ENCODE measurements at regions of chr11 and their contacts with region 1.

Region 1: GRCh38 chr11:126480410-126481302 is 125.2 kb downstream of the ST3GAL4 start:
- DNase-seq: peak; percentile 60 to 66
- H3K4me3 ChIP-seq: no peak overlapping the region; the same call in 1 of the 2 replicates
- H3K27ac ChIP-seq: no peak overlapping the region
- H3K4me1 ChIP-seq: peaks cover 12% of the 10 kb centered on the region; the same call in 1 of the 2 replicates
- H3K27me3 ChIP-seq: 0 out of 2 replicates have a peak, but pooled peaks cover 3% of the 10 kb centered on the region
- CTCF ChIP-seq: peak; percentile 96

Region 2: DNA sequence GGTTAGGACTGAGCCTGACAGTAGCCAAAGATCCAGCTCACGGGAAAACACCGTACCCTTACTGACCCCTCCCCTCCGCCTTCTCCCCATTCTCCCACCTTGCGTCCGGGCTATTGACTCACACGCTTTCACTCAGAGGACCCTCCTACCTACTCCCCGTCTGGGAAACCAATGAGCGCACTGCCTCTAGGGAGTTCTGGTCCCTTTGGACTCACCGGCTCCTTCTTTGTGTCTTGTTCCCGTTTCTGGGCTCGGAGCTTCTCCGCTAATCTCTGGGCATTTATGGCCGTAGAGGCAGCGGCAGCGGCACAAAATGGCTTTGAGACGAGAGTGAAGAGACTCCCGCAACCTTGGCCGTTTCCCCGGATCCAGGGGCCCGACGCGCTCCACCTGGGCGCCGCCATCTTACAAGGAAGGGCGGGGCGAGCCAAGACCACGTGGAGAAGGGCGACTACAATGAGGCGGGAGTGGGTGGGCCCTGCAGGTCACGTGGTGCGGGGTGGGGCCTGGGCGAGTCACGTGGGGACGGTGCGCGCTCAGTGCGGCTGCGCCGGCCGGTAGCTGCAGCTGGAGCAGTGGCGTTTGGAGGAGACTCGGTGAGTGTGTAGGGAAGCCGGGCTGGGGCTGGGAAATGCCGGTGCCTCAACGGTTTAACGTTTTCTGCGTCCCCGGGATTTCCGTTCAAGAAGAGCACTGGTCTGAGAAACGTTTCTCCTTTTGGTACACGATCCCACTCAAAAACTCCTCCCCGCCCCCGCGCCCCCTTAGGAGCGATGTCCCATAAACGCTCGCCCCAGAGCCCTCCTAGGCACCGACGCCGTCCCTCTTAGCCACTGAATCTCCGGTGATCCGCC is 269.2 kb before region 1 on chr11 and contains the starts of genes FAM118B and RPUSD4:
- CTCF ChIA-PET with region 1: interaction called, 12 read pairs
- POLR2A ChIA-PET with region 1: no interaction called
- intact Hi-C with region 1: no loop called
- DNase-seq: peak; percentile 87 to 98
- H3K4me3 ChIP-seq: peak within 1 kb of the TSS; percentile 72
- H3K27ac ChIP-seq: peak within 1 kb of the TSS; percentile 43
- H3K4me1 ChIP-seq: peaks cover 18% of the 10 kb centered on the region
- H3K27me3 ChIP-seq: no peaks in the 10 kb centered on the region
- CTCF ChIP-seq: no peak
- total RNA-seq, gene FAM118B: 12.5 and 13.1 TPM in 2 replicates
- total RNA-seq, gene RPUSD4: 25.1 and 26.0 TPM in 2 replicates